Activated B cell treated with CpG ODN at 0.5 μM for 24 hours (primary cell): ENCODE measurements at regions of chr15 and their contacts with region 1.

Region 1: GRCh38 chr15:32899126-32899596 is 181.4 kb downstream of the GREM1 start:
- DNase-seq: peak; percentile 58
- ATAC-seq: peak; percentile 98
- H3K4me3 Mint-ChIP-seq: peak overlapping the region; percentile 44
- H3K27ac Mint-ChIP-seq: no peak overlapping the region
- H3K4me1 Mint-ChIP-seq: peaks cover 32% of the 10 kb centered on the region
- H3K27me3 Mint-ChIP-seq: peaks cover 3% of the 10 kb centered on the region
- CTCF ChIP-seq: no peak

Region 2: DNA sequence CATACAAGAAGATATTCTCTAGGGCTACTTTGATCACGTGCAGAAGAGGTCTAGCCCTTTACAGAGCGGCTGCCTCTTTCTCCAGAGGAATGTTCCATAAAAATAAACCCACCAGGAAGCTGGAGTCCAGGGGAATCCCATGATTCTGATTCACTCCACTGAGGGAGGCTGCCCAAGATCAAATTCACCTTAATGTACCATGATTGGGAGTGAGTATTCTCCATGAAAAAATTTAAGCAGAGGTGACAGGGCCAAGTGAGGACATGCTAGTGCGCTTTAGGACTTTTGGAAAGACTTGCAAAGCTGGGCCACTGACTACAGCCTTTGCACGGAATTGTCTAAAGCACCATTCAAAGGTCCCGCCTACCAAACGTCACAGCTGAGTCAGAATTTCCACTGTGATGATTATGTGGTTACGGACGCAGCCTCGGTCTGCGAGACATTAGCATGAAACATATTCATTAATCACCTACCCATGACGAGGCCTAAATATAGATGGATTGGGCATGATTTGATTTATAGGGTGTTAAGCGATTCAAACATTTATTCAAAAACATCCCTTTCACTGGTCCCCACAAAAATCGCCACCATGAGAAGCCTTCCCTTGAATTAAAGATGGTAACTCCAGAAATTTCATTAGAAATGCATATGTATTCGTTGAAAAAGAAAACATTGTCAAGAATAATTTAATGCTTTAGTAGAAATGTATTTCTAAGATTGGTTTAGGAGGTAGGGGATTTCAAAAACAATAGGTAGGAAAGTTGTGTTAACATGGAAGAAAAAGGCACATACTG is 28.7 kb before region 1 on chr15:
- CTCF ChIA-PET with region 1: no interaction called
- POLR2A ChIA-PET with region 1: no interaction called
- intact Hi-C with region 1: loop called (anchors 2 kb)
- DNase-seq: peak; percentile 57
- ATAC-seq: peak; percentile 86
- H3K4me3 Mint-ChIP-seq: no peak overlapping the region
- H3K27ac Mint-ChIP-seq: peak overlapping the region; percentile 48
- H3K4me1 Mint-ChIP-seq: peaks cover 16% of the 10 kb centered on the region
- H3K27me3 Mint-ChIP-seq: peaks cover 2% of the 10 kb centered on the region
- CTCF ChIP-seq: no peak